ENCODE measurements at regions of chr1 and their contacts with region 1.

Region 1: DNA sequence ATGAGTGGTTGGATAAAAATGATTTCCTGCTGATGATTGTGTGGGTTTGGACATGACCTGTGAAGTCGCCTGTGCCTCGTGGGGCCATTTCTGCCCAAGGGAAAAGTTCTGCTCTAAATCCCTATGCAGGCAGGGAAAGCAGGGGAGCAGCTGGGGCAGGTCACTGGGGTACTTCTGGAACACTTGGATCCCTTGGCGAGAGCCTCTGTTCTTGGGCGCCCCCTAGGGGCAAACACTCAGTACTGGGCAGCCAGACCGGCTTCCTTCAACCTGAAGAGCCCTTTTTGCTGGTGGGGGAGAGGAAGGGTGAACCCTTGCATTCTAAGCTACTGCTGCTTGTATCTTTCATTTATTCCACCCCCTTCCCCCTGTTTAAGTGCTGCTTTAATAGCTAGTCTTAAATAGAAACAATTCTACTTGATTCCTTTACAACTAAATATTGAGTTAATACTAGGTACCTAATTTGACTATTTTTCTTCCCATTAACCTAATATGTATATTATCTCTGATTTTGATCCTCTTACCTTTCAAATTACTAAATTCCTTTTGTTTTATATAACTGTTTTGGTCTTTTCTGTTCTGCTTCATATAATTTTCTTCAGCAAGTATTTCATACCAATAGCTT is 5.1 kb upstream of the CLEC20A start:
- DNase-seq: peak; percentile 85
- H3K4me3 Mint-ChIP-seq: no peak overlapping the region
- H3K27ac Mint-ChIP-seq: no peak overlapping the region
- H3K4me1 Mint-ChIP-seq: no peaks in the 10 kb centered on the region
- H3K27me3 Mint-ChIP-seq: no peaks in the 10 kb centered on the region
- CTCF ChIP-seq: peak; percentile 98

Region 2: DNA sequence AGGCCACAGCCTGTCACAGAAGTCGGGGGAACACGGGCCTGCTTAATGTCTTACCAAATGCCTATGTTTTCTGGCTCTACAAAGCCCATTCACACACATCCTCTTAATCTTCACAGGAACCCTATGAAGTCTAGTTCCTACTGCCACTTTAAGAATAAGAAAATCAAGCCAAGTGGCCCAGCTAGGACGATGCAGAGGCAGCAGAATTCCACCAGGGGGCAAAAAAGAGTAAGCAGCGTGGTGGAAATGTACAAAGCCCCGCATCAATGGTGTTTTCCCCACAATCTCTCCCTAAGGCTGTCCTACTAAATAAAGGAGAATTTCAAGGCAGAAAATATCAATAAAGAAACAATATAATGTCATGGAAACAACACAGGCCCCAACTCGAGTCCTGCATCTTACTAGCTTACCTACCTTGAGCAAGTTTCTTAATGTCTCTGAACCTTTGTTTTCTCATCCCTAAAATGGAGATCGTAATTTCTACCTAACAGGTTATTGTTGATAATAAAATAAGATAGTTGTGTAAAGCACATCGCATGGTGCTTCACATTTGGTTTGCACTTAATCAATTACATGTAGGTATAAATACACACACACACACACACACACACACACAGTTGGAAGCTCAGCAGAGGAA is 553.4 kb before region 1 on chr1:
- CTCF ChIA-PET with region 1: interaction called, 3 read pairs
- POLR2A ChIA-PET with region 1: no interaction called
- intact Hi-C with region 1: loop called (anchors 1 kb)
- DNase-seq: peak; percentile 86
- H3K4me3 Mint-ChIP-seq: no peak overlapping the region
- H3K27ac Mint-ChIP-seq: no peak overlapping the region
- H3K4me1 Mint-ChIP-seq: peaks cover 6% of the 10 kb centered on the region
- H3K27me3 Mint-ChIP-seq: no peaks in the 10 kb centered on the region
- CTCF ChIP-seq: peak; percentile 97

Region 3: GRCh38 chr1:178282949-178283367 is 218.9 kb before region 1 on chr1:
- CTCF ChIA-PET with region 1: interaction called, 10 read pairs
- POLR2A ChIA-PET with region 1: no interaction called
- intact Hi-C with region 1: no loop called
- DNase-seq: peak; percentile 85
- H3K4me3 Mint-ChIP-seq: no peak overlapping the region
- H3K27ac Mint-ChIP-seq: peak overlapping the region; percentile 28
- H3K4me1 Mint-ChIP-seq: peaks cover 38% of the 10 kb centered on the region
- H3K27me3 Mint-ChIP-seq: no peaks in the 10 kb centered on the region
- CTCF ChIP-seq: peak; percentile 77

Region 4: GRCh38 chr1:178330153-178330552 is 171.7 kb before region 1 on chr1:
- CTCF ChIA-PET with region 1: interaction called, 19 read pairs
- POLR2A ChIA-PET with region 1: no interaction called
- intact Hi-C with region 1: no loop called
- DNase-seq: peak; percentile 38
- H3K4me3 Mint-ChIP-seq: no peak overlapping the region
- H3K27ac Mint-ChIP-seq: peak overlapping the region; percentile 9
- H3K4me1 Mint-ChIP-seq: peaks cover 26% of the 10 kb centered on the region
- H3K27me3 Mint-ChIP-seq: no peaks in the 10 kb centered on the region
- CTCF ChIP-seq: no peak

Region 5: GRCh38 chr1:178371235-178371634 is 130.6 kb before region 1 on chr1:
- CTCF ChIA-PET with region 1: interaction called, 13 read pairs
- POLR2A ChIA-PET with region 1: no interaction called
- intact Hi-C with region 1: no loop called
- DNase-seq: no peak
- H3K4me3 Mint-ChIP-seq: no peak overlapping the region
- H3K27ac Mint-ChIP-seq: no peak overlapping the region
- H3K4me1 Mint-ChIP-seq: no peaks in the 10 kb centered on the region
- H3K27me3 Mint-ChIP-seq: no peaks in the 10 kb centered on the region
- CTCF ChIP-seq: no peak

Region 6: GRCh38 chr1:178470411-178470960 is 31.3 kb before region 1 on chr1:
- CTCF ChIA-PET with region 1: interaction called, 82 read pairs
- POLR2A ChIA-PET with region 1: no interaction called
- intact Hi-C with region 1: no loop called
- DNase-seq: peak; percentile 54
- H3K4me3 Mint-ChIP-seq: no peak overlapping the region
- H3K27ac Mint-ChIP-seq: peak overlapping the region; percentile 85
- H3K4me1 Mint-ChIP-seq: peaks cover 18% of the 10 kb centered on the region
- H3K27me3 Mint-ChIP-seq: no peaks in the 10 kb centered on the region
- CTCF ChIP-seq: no peak

Region 7: DNA sequence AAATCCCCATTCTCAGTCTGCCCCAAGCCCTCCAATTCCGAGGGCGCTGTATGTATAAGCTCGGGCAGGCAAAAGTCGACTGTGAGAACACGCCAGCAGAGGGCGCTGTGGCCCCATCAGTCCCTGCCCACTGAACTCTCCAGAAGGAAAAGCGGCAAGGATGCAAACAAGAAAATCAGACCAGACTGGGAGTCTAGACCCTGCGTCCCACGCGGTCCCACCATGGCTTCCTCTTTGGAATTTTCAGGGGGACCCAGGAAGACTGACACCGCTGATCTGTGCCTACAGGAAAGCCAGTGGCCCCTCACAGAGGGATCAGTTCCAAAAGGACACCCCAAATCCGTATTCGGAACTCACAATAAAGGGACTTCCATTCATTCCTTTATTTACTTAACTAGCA is 30.6 kb after region 1 on chr1:
- CTCF ChIA-PET with region 1: interaction called, 120 read pairs
- POLR2A ChIA-PET with region 1: no interaction called
- intact Hi-C with region 1: no loop called
- DNase-seq: peak; percentile 88
- H3K4me3 Mint-ChIP-seq: no peak overlapping the region
- H3K27ac Mint-ChIP-seq: no peak overlapping the region
- H3K4me1 Mint-ChIP-seq: peaks cover 36% of the 10 kb centered on the region
- H3K27me3 Mint-ChIP-seq: peaks cover 7% of the 10 kb centered on the region
- CTCF ChIP-seq: peak; percentile 99

Measured in MCF 10A (cell line).